ENCODE measurements at regions of chr21 and their contacts with region 1.

Region 1: GRCh38 chr21:40331172-40331571 is 463.9 kb downstream of the PCP4 start:
- DNase-seq: peak; percentile 64
- ATAC-seq: peak; percentile 39

Region 2: DNA sequence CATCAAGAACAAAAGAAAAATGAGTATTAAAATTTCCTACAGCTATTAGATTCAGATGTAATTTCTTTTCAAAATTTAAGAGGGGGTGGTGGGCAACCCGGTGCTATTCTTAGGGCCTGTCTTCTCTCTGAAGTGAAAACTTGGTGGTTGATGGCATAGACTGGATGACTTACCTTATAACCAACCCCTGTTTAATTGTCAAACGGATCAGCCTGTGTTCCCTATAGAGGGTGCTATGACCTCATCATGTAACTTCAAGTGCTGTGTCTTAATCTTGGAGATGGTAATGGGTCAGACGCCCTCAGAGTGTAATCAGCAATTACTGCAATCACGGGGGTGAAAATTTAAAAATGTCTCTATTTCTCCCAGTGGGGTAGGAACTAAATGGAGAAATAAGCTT is 287.7 kb before region 1 on chr21:
- intact Hi-C with region 1: no loop called
- DNase-seq: no peak
- ATAC-seq: peak; percentile 56

Region 3: DNA sequence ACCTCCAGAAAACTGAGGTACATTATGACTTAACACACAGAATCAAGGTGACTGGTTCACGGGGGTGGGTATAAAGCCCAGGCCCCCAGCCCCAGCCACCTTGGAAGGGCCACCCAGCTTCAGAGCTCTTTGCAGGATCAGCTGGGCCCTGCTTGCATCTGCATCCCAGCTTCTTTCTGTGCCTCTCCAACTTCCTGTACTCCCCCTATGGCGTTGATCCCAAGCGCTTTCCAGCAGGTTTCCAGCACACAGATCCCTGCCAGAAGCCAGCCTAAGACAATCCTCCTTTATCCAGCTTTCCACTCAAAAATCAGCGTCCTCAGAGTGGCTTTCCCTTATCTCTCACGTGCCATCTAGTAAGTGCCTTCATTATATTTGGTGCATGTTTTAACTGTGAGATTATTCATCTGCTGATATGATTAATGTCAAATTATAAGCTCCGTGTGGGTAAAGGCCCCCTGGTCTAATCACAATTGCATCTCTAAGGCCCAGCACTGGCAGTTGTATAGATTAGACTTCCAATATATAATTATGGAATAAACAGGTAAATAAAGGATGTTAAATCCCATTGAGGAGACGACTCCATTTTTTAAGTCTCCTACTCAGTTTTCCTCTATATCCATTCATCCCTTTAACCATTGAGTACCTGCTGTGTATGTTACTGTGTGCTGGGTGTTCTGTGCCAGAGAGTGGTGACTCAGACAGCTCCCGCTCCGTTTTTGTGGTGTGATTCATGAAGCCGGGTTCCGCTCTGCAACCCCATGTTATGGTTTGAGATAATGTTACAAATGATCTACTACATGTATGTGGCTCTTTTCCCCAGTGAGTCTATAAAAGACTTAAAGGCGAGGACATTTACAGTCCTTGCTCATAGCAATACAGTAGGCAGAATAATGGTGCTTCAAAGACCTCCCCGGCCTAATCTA is 76.4 kb before region 1 on chr21:
- intact Hi-C with region 1: no loop called
- DNase-seq: no peak
- ATAC-seq: no peak

Region 4: DNA sequence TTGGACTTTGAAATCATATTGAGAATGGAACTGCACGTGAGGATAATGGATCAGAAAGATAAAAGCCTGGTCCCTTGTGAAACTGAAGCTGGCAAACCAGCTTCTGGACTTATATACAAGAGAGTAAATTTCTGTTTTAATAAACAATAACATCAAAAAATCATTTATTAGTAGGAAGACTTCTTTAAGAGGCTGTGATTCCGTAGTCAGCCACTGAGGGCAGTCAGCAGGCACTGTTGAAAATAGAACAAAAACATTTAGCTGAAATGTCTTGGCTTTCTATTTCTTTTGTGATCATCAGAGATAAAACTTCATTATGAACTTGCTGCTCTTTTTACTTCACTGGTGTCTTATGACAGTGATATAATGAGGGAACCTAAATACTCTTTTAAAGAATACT is 25.5 kb after region 1 on chr21:
- intact Hi-C with region 1: loop called (anchors 1 kb)
- DNase-seq: no peak
- ATAC-seq: no peak